CD4-positive, alpha-beta memory T cell (primary cell): ENCODE measurements at regions of chr10 and their contacts with region 1.

Region 1: GRCh38 chr10:101291331-101292193 is 62.3 kb upstream of the LBX1 start:
- DNase-seq: peak in 4 of 5 donors; percentile 13 to 24 (median 19)
- H3K4me3 ChIP-seq: peak overlapping the region in 1 of 2 donors; percentile 38
- H3K4me3 Mint-ChIP-seq: peak overlapping the region; percentile 73 to 86 (median 82)
- H3K27ac ChIP-seq: no peak overlapping the region
- H3K27ac Mint-ChIP-seq: no peak overlapping the region
- H3K4me1 ChIP-seq: peaks cover 19% of the 10 kb centered on the region
- H3K4me1 Mint-ChIP-seq: peaks cover 0 to 19% (median 4%) of the 10 kb centered on the region in 4 donors
- H3K27me3 ChIP-seq: peaks cover 50% of the 10 kb centered on the region
- H3K27me3 Mint-ChIP-seq: peaks cover 52 to 57% of the 10 kb centered on the region in 2 donors

Region 2: DNA sequence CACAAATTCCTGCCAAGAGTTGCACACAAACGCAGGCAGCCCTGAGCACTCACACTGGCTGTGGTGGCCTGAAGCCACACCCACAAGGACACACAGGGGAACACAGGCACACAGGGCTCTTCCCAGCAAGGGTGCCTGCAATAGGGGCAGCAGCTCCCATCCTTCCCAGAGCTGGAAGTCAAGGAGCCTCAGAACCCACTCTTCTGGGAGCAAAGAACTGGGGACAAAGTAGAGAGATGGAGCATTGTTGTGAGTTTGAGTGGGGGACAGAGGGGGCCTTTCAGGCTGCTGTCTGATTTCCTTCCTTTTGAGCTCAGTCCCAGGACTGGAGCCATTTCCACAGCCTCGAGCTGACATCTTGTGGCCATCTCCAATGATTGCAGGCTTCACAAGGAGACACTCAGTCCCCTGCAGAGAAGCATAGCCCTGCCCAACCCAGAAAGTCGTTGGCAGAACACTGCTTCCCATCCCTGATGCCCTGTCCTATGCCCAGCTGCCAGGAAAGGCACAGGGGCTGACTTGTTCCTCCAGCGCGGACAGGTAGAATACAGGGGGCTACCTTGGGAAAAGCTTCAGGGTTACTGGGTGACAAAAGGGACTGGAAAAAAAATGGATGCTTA is 413.2 kb before region 1 on chr10:
- CTCF ChIA-PET with region 1: no interaction called
- POLR2A ChIA-PET with region 1: no interaction called
- intact Hi-C with region 1: no loop called
- DNase-seq: peak in 3 of 5 donors; percentile 13 to 17 (median 14)
- H3K4me3 ChIP-seq: no peak overlapping the region
- H3K4me3 Mint-ChIP-seq: no peak overlapping the region
- H3K27ac ChIP-seq: no peak overlapping the region
- H3K27ac Mint-ChIP-seq: no peak overlapping the region
- H3K4me1 ChIP-seq: no peaks in the 10 kb centered on the region
- H3K4me1 Mint-ChIP-seq: no peaks in the 10 kb centered on the region
- H3K27me3 ChIP-seq: no peaks in the 10 kb centered on the region
- H3K27me3 Mint-ChIP-seq: peaks cover 11 to 23% of the 10 kb centered on the region in 2 donors

Region 3: DNA sequence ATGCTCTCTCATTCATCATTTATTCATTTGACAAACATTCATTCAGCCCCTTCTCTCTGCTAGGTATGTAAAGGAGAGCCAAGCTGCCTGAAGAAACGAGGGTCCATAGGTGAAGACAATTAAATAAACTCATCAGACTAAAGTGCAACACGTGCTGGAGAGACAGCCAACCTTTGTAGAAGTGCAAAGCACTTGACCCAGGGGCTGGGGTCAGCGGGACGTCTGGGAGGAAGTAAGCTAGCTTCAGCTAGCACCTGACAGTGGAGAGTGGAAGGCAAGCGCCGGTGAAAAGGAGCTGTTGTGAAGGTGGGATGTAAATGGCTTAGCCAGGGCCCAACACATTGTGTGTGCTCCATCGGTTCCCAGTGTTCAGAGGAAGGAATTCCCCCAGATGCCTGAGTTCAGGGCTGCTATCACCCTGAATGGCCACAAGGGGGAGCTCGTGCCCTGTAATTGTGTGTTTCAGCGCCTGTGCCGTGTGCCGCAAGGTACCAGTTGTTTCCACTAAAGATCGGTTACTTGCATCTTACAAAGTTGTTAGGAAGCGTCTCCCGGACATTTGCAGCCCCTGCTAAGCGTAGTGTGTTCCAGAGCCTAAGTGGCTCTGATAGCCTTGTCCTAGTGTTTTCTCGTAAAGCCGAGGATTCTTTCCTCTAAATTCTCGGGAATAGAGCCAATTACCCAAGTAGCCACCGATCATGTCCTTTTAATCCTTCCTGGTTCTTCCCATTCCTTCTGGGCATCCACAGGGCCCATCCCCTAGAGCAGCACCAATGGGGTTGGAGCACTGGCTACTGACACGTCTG is 129.9 kb before region 1 on chr10:
- CTCF ChIA-PET with region 1: no interaction called
- POLR2A ChIA-PET with region 1: no interaction called
- intact Hi-C with region 1: loop called (anchors 1 kb)
- DNase-seq: peak; percentile 62 to 71 (median 69)
- H3K4me3 ChIP-seq: no peak overlapping the region
- H3K4me3 Mint-ChIP-seq: peak overlapping the region in 3 of 8 donors; percentile 41 to 69 (median 62)
- H3K27ac ChIP-seq: no peak overlapping the region
- H3K27ac Mint-ChIP-seq: peak overlapping the region in 2 of 7 donors; percentile 14 to 20
- H3K4me1 ChIP-seq: peaks cover 8% of the 10 kb centered on the region
- H3K4me1 Mint-ChIP-seq: peaks cover 6 to 14% (median 11%) of the 10 kb centered on the region in 4 donors
- H3K27me3 ChIP-seq: peaks cover 7% of the 10 kb centered on the region
- H3K27me3 Mint-ChIP-seq: peaks cover 38 to 51% of the 10 kb centered on the region in 2 donors

Region 4: GRCh38 chr10:101341438-101341837 is 49.9 kb after region 1 on chr10:
- CTCF ChIA-PET with region 1: no interaction called
- POLR2A ChIA-PET with region 1: no interaction called
- intact Hi-C with region 1: no loop called
- DNase-seq: no peak
- H3K4me3 ChIP-seq: no peak overlapping the region
- H3K4me3 Mint-ChIP-seq: no peak overlapping the region
- H3K27ac ChIP-seq: no peak overlapping the region
- H3K27ac Mint-ChIP-seq: no peak overlapping the region
- H3K4me1 ChIP-seq: no peaks in the 10 kb centered on the region
- H3K4me1 Mint-ChIP-seq: no peaks in the 10 kb centered on the region
- H3K27me3 ChIP-seq: no peaks in the 10 kb centered on the region
- H3K27me3 Mint-ChIP-seq: peaks cover 4 to 5% of the 10 kb centered on the region in 2 donors